ENCODE measurements at regions of chr17 and their contacts with region 1.

Region 1: DNA sequence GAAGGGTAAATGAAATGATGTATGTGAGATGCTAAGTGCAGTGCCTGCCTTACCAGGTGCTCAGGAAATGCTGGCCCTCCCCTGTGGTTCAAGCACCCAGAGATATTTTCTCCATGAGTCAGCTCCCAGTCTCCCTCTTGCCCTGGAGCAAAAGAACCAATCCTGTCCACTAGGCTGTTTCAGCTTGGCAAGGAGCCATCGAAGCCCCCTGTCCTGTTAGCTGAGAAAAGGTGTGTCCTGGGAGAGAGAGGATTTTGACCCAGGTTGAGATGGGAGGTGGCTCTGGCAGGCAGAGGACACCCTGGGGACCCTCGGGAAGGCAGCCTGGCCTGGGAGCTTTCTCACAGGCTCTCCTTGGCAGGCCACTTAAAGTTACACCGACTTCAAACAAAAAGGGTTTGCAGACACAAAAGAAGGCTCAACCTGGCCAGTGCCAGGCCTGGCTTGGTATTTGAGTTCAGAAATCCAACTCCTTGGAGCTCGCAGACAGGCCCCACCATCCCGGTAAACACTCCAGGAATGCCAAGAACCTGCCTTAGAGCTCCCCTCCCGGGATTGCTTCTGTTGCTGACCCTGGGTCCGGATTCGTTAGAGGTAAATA is 29.6 kb downstream of the NTN1 start:
- DNase-seq: peak; percentile 80 to 90
- H3K4me3 ChIP-seq: peak overlapping the region; percentile 47; the same call in 1 of the 2 replicates
- H3K27ac ChIP-seq: peak overlapping the region; percentile 85
- H3K4me1 ChIP-seq: peaks cover 31% of the 10 kb centered on the region
- H3K27me3 ChIP-seq: no peaks in the 10 kb centered on the region
- CTCF ChIP-seq: no peak

Region 2: GRCh38 chr17:9021158-9021991 is 29.5 kb before region 1 on chr17 and contains the start of gene NTN1:
- CTCF ChIA-PET with region 1: no interaction called
- POLR2A ChIA-PET with region 1: interaction called, 4 read pairs
- intact Hi-C with region 1: loop called (anchors 1 kb)
- DNase-seq: peak in 1 of 2 experiments; percentile 76
- H3K4me3 ChIP-seq: peak within 1 kb of the TSS; percentile 55; the same call in 1 of the 2 replicates
- H3K27ac ChIP-seq: no peak within 1 kb of the TSS
- H3K4me1 ChIP-seq: peaks cover 17% of the 10 kb centered on the region
- H3K27me3 ChIP-seq: no peaks in the 10 kb centered on the region
- CTCF ChIP-seq: no peak
- total RNA-seq, gene NTN1: 17.7 and 24.5 TPM in 2 replicates

Region 3: GRCh38 chr17:10695586-10696407 is 1644.9 kb after region 1 on chr17:
- CTCF ChIA-PET with region 1: no interaction called
- POLR2A ChIA-PET with region 1: interaction called, 11 read pairs
- intact Hi-C with region 1: no loop called
- DNase-seq: no peak
- H3K4me3 ChIP-seq: peak overlapping the region; percentile 90
- H3K27ac ChIP-seq: no peak overlapping the region
- H3K4me1 ChIP-seq: no peaks in the 10 kb centered on the region
- H3K27me3 ChIP-seq: no peaks in the 10 kb centered on the region
- CTCF ChIP-seq: no peak

Measured in PC-9 (cell line).